ENCODE measurements at regions of chr4 and their contacts with region 1.

Region 1: DNA sequence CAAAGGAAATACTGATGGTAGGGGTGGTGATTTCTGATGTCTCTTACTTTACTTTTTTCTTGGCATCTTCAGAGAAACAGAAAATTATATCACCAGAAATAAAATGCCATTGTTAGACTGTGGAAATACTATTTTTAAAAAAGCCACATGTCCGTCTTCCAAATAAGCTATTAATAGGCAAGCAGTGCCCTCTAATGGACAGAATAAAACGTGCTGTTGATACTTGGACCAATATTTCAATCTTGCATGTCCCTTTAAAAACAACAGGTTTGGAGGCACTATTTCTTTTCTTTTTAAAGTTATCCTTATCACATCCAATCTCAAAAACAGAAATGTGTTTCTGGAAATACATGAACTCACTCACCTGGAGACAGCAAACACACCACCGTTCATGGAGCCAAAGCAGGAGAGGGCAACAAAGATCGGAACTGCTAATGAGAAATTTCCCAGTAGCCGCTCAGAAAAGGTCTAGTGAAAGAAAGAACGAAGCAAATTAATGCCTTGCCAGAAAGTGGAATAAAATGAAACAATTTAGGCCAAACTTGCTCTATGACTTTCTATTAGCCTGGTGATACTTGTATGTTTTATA is 59.2 kb downstream of the SLC7A11 start:
- DNase-seq: no peak
- H3K4me3 ChIP-seq: no peak overlapping the region
- H3K27ac ChIP-seq: no peak overlapping the region
- H3K4me1 ChIP-seq: no peaks in the 10 kb centered on the region
- H3K27me3 ChIP-seq: no peaks in the 10 kb centered on the region
- CTCF ChIP-seq: peak; percentile 57

Region 2: GRCh38 chr4:137819964-137820383 is 363.0 kb before region 1 on chr4:
- CTCF ChIA-PET with region 1: no interaction called
- POLR2A ChIA-PET with region 1: no interaction called
- intact Hi-C with region 1: loop called (anchors 10 kb)
- DNase-seq: peak; percentile 12 to 37
- H3K4me3 ChIP-seq: no peak overlapping the region
- H3K27ac ChIP-seq: no peak overlapping the region
- H3K4me1 ChIP-seq: no peaks in the 10 kb centered on the region
- H3K27me3 ChIP-seq: no peaks in the 10 kb centered on the region
- CTCF ChIP-seq: peak; percentile 69